ENCODE measurements at regions of chr3 and their contacts with region 1.

Region 1: GRCh38 chr3:12663936-12664908 is at the start of gene RAF1:
- DNase-seq: peak; percentile 96 to 98 (median 98)
- ATAC-seq: peak; percentile 98
- H3K4me3 ChIP-seq: peak within 1 kb of the TSS; percentile 78
- H3K4me3 Mint-ChIP-seq: peak within 1 kb of the TSS; percentile 88 to 100 (median 98)
- H3K27ac ChIP-seq: peak within 1 kb of the TSS; percentile 95
- H3K27ac Mint-ChIP-seq: peak within 1 kb of the TSS; percentile 98 to 100 (median 99)
- H3K4me1 ChIP-seq: peaks cover 12 to 20% of the 10 kb centered on the region in 2 donors
- H3K4me1 Mint-ChIP-seq: peaks cover 19 to 44% (median 33%) of the 10 kb centered on the region in 7 donors
- H3K27me3 ChIP-seq: no peaks in the 10 kb centered on the region
- H3K27me3 Mint-ChIP-seq: no peaks in the 10 kb centered on the region
- total RNA-seq, gene RAF1: 93.4 to 129 (median 125) TPM

Region 2: DNA sequence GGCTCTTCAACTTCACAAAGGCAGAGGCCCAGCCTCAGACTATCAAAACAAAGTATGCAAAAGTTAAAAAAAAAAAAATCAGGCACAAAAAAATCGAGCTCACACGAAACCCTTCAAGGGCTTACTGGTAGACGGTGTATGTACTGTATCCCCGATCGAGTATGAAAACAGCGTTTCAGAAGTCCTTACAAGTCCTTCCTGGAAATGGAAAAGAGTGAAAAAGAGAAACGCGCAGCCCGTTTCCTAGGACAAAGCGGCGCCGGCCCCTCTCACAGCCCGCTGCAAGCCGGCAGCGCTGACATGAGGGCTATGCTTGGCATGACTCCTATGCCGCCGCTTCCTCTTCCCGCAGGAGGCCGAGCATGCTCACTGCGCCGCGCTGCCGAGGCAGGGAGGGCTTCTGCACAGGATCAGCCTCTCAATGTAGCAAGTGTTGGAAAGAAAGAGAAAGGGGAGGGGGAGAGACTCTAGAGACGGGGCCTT is 1020.6 kb before region 1 on chr3 and contains the start of gene VGLL4:
- CTCF ChIA-PET with region 1: no interaction called
- POLR2A ChIA-PET with region 1: no interaction called
- intact Hi-C with region 1: loop called in 1 of 2 experiments (anchors 5 kb)
- DNase-seq: peak; percentile 42 to 71 (median 58)
- ATAC-seq: peak; percentile 72
- H3K4me3 ChIP-seq: peak within 1 kb of the TSS; percentile 98
- H3K4me3 Mint-ChIP-seq: peak within 1 kb of the TSS; percentile 90 to 100 (median 98)
- H3K27ac ChIP-seq: peak within 1 kb of the TSS; percentile 91
- H3K27ac Mint-ChIP-seq: peak within 1 kb of the TSS; percentile 94 to 100 (median 99)
- H3K4me1 ChIP-seq: peaks cover 12 to 23% of the 10 kb centered on the region in 2 donors
- H3K4me1 Mint-ChIP-seq: peaks cover 22 to 43% (median 37%) of the 10 kb centered on the region in 7 donors
- H3K27me3 ChIP-seq: no peaks in the 10 kb centered on the region
- H3K27me3 Mint-ChIP-seq: peaks cover 0 to 17% (median 0%) of the 10 kb centered on the region in 5 donors
- total RNA-seq, gene VGLL4: 22.9 to 44.8 (median 36.2) TPM

Region 3: GRCh38 chr3:12484198-12484974 is 179.8 kb before region 1 on chr3 and contains the start of gene TSEN2:
- CTCF ChIA-PET with region 1: no interaction called
- POLR2A ChIA-PET with region 1: interaction called, 14 read pairs
- intact Hi-C with region 1: loop called (anchors 1 kb)
- DNase-seq: peak; percentile 95 to 100 (median 98)
- ATAC-seq: peak; percentile 96
- H3K4me3 ChIP-seq: peak within 1 kb of the TSS; percentile 76
- H3K4me3 Mint-ChIP-seq: peak within 1 kb of the TSS; percentile 87 to 99 (median 97)
- H3K27ac ChIP-seq: peak within 1 kb of the TSS; percentile 92
- H3K27ac Mint-ChIP-seq: peak within 1 kb of the TSS; percentile 96 to 99 (median 98)
- H3K4me1 ChIP-seq: peaks cover 17% of the 10 kb centered on the region in 2 donors
- H3K4me1 Mint-ChIP-seq: peaks cover 21 to 65% (median 44%) of the 10 kb centered on the region in 7 donors
- H3K27me3 ChIP-seq: no peaks in the 10 kb centered on the region
- H3K27me3 Mint-ChIP-seq: peaks cover 0 to 2% (median 0%) of the 10 kb centered on the region in 5 donors
- total RNA-seq, gene TSEN2: 12.1 to 27.5 (median 13.6) TPM

Region 4: DNA sequence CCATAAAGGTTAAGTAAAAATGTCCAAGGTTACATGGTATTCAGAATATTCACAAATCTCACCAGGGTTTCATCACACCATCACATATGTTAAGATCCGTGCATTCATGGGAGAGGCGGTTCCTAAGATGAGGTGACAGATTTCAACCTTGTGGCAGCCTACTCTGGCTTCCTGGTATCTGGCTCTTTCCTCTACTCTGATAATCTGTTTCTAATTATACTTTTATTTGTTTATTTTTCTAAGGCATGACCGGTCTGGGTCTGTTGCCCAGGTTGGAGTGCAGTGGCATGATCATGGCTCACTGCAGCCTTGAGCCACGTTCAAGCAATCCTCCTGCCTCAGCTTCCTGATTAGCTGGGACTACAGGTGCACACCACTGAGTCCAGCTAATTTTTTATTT is 34.7 kb before region 1 on chr3:
- CTCF ChIA-PET with region 1: no interaction called
- POLR2A ChIA-PET with region 1: no interaction called
- intact Hi-C with region 1: loop called in 1 of 2 experiments (anchors 5 kb)
- DNase-seq: no peak
- ATAC-seq: no peak
- H3K4me3 ChIP-seq: no peak overlapping the region
- H3K4me3 Mint-ChIP-seq: peak overlapping the region in 1 of 10 donors; percentile 2
- H3K27ac ChIP-seq: no peak overlapping the region
- H3K27ac Mint-ChIP-seq: peak overlapping the region in 3 of 9 donors; percentile 11 to 65 (median 46)
- H3K4me1 ChIP-seq: peaks cover 7 to 19% of the 10 kb centered on the region in 2 donors
- H3K4me1 Mint-ChIP-seq: peaks cover 29 to 79% (median 73%) of the 10 kb centered on the region in 7 donors
- H3K27me3 ChIP-seq: no peaks in the 10 kb centered on the region
- H3K27me3 Mint-ChIP-seq: no peaks in the 10 kb centered on the region

Region 5: GRCh38 chr3:12810013-12810780 is 146.0 kb after region 1 on chr3:
- CTCF ChIA-PET with region 1: no interaction called
- POLR2A ChIA-PET with region 1: interaction called, 8 read pairs
- intact Hi-C with region 1: loop called in 1 of 2 experiments (anchors 1 kb)
- DNase-seq: peak; percentile 89 to 98 (median 94)
- ATAC-seq: peak; percentile 99
- H3K4me3 ChIP-seq: peak overlapping the region; percentile 79
- H3K4me3 Mint-ChIP-seq: peak overlapping the region; percentile 63 to 82 (median 77)
- H3K27ac ChIP-seq: peak overlapping the region; percentile 68
- H3K27ac Mint-ChIP-seq: peak overlapping the region; percentile 23 to 85 (median 64)
- H3K4me1 ChIP-seq: peaks cover 3 to 7% of the 10 kb centered on the region in 2 donors
- H3K4me1 Mint-ChIP-seq: peaks cover 4 to 16% (median 12%) of the 10 kb centered on the region in 7 donors
- H3K27me3 ChIP-seq: no peaks in the 10 kb centered on the region
- H3K27me3 Mint-ChIP-seq: peaks cover 0 to 11% (median 0%) of the 10 kb centered on the region in 5 donors

Region 6: DNA sequence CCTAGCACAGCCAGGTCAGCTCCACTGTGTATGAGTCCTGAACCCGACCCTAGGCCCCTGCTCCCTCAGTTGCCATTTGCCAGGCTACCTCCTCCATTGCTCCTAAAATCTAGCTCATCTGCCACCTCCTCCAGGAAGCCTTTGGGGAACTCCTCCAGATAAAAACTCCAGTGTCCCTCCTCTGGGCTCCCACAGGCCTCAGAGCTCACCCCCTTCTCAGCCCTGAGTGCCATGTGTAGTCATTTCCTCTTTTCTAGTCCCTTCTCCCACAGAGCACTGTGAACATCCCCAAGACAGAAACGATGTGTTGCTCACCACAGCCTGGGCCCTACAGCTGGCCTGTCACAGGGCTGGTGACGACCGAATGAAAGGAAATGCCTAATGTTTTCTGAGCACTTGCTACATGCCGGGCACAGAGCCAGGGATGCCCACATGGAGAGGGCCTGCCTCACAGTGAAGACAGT is 348.0 kb after region 1 on chr3:
- CTCF ChIA-PET with region 1: no interaction called
- POLR2A ChIA-PET with region 1: no interaction called
- intact Hi-C with region 1: loop called in 1 of 2 experiments (anchors 2 kb)
- DNase-seq: peak in 2 of 9 donors; percentile 24 to 52
- ATAC-seq: peak; percentile 60
- H3K4me3 ChIP-seq: peak overlapping the region; percentile 38
- H3K4me3 Mint-ChIP-seq: peak overlapping the region; percentile 69 to 96 (median 84)
- H3K27ac ChIP-seq: peak overlapping the region; percentile 99
- H3K27ac Mint-ChIP-seq: peak overlapping the region; percentile 96 to 100 (median 98)
- H3K4me1 ChIP-seq: peaks cover 84 to 90% of the 10 kb centered on the region in 2 donors
- H3K4me1 Mint-ChIP-seq: peaks cover 72 to 92% (median 77%) of the 10 kb centered on the region in 7 donors
- H3K27me3 ChIP-seq: no peaks in the 10 kb centered on the region
- H3K27me3 Mint-ChIP-seq: no peaks in the 10 kb centered on the region

Region 7: DNA sequence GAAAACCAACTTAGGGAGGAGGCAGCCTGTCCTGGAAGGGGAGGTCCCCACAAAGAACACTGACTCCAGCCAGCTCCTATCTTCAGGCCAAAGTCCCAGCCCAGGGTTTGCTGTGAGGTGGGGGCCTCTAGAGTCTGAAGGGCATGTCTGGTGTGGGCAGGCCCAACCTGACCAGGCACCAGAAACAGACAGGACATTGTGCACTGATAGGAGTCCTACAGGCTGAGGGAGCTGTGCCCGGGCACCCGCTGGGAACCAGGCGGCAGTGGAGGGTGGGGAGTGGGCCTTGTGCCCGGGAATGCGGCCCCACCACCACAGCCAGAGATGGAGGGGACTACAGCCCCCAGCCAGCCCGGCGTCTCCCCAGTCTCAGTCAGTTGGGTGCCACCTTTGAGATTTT is 1054.2 kb after region 1 on chr3:
- CTCF ChIA-PET with region 1: no interaction called
- POLR2A ChIA-PET with region 1: no interaction called
- intact Hi-C with region 1: no loop called
- DNase-seq: no peak
- ATAC-seq: no peak
- H3K4me3 ChIP-seq: no peak overlapping the region
- H3K4me3 Mint-ChIP-seq: no peak overlapping the region
- H3K27ac ChIP-seq: no peak overlapping the region
- H3K27ac Mint-ChIP-seq: peak overlapping the region in 1 of 9 donors; percentile 4
- H3K4me1 ChIP-seq: no peaks in the 10 kb centered on the region
- H3K4me1 Mint-ChIP-seq: no peaks in the 10 kb centered on the region
- H3K27me3 ChIP-seq: no peaks in the 10 kb centered on the region
- H3K27me3 Mint-ChIP-seq: peaks cover 0 to 9% (median 0%) of the 10 kb centered on the region in 5 donors

Region 8: DNA sequence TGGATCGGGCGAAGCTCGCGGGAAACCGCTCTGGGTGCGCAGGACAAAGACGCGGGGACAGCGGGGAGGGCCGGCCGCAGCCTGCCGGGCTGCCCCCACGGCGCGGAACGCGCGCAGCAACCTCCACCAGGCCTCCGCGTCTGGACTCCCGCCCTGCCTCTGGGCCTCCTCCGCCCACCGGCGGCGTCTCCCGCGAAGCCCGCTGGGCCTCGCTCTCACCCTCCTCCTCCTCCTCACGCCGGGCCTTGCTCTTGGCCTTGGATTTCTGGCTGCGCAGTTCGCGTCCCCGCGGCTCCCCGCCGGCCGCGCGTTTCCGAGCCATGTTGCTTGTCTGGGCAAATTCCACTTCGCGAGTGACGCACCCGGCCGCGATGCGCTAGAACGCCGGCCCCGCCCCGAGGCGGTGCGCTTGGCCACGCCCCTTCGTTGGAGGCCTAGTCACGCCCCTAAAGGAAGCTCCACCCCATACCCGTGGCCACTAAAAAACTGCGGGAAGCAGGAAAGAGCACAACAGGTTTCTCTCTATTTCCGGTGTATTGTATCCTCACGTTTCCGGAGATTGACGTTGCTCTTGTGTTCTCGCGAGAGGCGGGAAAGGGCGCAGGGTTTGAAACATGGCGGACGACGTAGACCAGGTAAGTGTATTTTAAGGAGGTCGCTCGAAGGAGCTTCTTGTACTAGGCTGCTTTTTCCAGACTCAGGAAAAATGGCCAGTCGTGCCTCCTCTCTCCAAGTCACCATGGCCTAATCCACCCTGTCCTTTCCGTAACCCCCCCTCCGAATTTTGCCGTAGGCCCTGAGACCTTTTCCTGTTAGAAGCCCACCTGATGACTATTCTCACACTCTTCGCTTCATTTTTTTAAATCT is 1514.3 kb after region 1 on chr3 and contains the starts of genes LSM3 and XPC:
- CTCF ChIA-PET with region 1: no interaction called
- POLR2A ChIA-PET with region 1: no interaction called
- intact Hi-C with region 1: loop called (anchors 1 to 5 kb)
- DNase-seq: peak; percentile 98 to 100 (median 99)
- ATAC-seq: peak; percentile 98
- H3K4me3 ChIP-seq: peak within 1 kb of the TSS; percentile 68
- H3K4me3 Mint-ChIP-seq: peak within 1 kb of the TSS; percentile 94 to 100 (median 98)
- H3K27ac ChIP-seq: peak within 1 kb of the TSS; percentile 99
- H3K27ac Mint-ChIP-seq: peak within 1 kb of the TSS; percentile 96 to 100 (median 99)
- H3K4me1 ChIP-seq: peaks cover 37 to 48% of the 10 kb centered on the region in 2 donors
- H3K4me1 Mint-ChIP-seq: peaks cover 45 to 85% (median 82%) of the 10 kb centered on the region in 7 donors
- H3K27me3 ChIP-seq: no peaks in the 10 kb centered on the region
- H3K27me3 Mint-ChIP-seq: peaks cover 0 to 2% (median 0%) of the 10 kb centered on the region in 5 donors
- total RNA-seq, gene LSM3: 6.0 to 14.1 (median 8.0) TPM
- total RNA-seq, gene XPC: 56.3 to 94.8 (median 78.1) TPM

Measured in naive thymus-derived CD4-positive, alpha-beta T cell (primary cell).